OCI-LY7 (cell line): ENCODE measurements at regions of chr4 and their contacts with region 1.

Region 1: GRCh38 chr4:139266583-139267257 is 13.3 kb downstream of the MGARP start:
- DNase-seq: peak; percentile 86
- H3K4me3 ChIP-seq: peak overlapping the region; percentile 68
- H3K27ac ChIP-seq: peak overlapping the region; percentile 78
- H3K4me1 ChIP-seq: peaks cover 39% of the 10 kb centered on the region
- CTCF ChIP-seq: no peak

Region 2: GRCh38 chr4:138555584-138555983 is 711.1 kb before region 1 on chr4:
- CTCF ChIA-PET with region 1: no interaction called
- POLR2A ChIA-PET with region 1: no interaction called
- intact Hi-C with region 1: no loop called
- DNase-seq: peak; percentile 11
- H3K4me3 ChIP-seq: no peak overlapping the region
- H3K27ac ChIP-seq: no peak overlapping the region
- H3K4me1 ChIP-seq: no peaks in the 10 kb centered on the region
- CTCF ChIP-seq: peak; percentile 66

Region 3: DNA sequence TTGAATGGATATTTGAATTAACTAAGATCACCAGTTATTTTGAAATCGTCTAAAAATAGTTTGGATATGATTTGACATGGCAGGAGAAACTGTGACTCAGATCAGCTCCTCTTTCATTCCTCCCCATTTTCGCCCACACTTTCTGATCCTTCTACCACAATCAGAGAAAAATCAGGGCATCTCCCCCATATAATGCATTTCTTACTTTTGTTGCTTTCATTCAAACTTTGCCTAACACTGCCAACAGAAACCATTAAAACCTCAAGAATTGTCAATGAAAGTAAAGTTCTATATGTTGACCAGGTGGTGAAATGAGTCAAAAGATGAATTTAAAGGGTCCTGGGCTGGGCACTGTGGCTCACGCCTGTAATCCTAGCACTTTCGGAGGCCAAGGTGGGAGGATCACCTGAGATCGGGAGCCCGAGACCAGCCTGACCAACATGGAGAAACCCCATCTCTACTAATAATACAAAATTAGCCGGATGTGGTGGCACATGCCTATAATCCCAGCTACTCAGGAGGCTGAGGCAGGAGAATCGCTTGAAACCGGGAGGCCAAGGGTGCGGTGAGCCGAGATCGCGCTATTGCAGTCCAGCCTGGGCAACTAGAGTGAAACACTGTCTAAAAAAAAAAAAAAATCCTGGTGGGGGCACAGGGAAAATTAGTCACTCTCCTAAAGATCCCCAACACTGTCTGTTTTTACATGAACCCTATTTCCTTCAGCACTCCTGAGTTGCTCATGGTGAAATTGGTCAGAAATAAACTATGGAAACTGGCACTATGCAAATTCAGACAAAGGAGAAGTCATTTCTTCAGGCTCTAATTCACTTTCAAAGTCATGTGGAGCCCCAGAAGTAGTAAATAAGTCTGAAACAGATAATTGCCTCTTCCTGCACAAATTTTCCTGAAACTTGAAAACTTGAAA is 374.0 kb before region 1 on chr4:
- CTCF ChIA-PET with region 1: no interaction called
- POLR2A ChIA-PET with region 1: no interaction called
- intact Hi-C with region 1: no loop called
- DNase-seq: no peak
- H3K4me3 ChIP-seq: no peak overlapping the region
- H3K27ac ChIP-seq: no peak overlapping the region
- H3K4me1 ChIP-seq: no peaks in the 10 kb centered on the region
- CTCF ChIP-seq: no peak

Region 4: DNA sequence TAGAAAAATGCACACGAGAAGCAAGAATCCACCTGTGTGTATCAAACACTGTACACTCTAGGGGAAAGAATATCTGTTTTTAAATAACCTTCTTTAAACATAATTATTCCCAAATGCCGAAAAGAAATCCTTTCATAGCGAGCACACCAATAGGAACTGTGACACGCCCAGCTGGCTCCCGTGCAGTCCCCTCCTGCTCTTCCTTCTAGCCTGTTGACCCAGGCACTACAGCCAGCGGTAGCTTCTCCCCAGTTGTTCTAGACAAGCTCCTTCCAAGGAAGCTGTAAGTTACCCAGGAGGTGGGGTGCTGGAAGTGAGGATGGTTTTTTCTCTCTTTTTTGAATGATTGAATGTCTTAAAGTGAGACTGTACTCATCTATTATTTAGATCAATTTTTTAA is 270.6 kb before region 1 on chr4:
- CTCF ChIA-PET with region 1: no interaction called
- POLR2A ChIA-PET with region 1: no interaction called
- intact Hi-C with region 1: no loop called
- DNase-seq: no peak
- H3K4me3 ChIP-seq: no peak overlapping the region
- H3K27ac ChIP-seq: no peak overlapping the region
- H3K4me1 ChIP-seq: no peaks in the 10 kb centered on the region
- CTCF ChIP-seq: no peak

Region 5: GRCh38 chr4:139253713-139254112 is 13.0 kb before region 1 on chr4:
- CTCF ChIA-PET with region 1: interaction called, 3 read pairs
- POLR2A ChIA-PET with region 1: interaction called, 24 read pairs
- intact Hi-C with region 1: no loop called
- DNase-seq: no peak
- H3K4me3 ChIP-seq: no peak overlapping the region
- H3K27ac ChIP-seq: peak overlapping the region; percentile 45
- H3K4me1 ChIP-seq: peaks cover 42% of the 10 kb centered on the region
- CTCF ChIP-seq: no peak

Region 6: DNA sequence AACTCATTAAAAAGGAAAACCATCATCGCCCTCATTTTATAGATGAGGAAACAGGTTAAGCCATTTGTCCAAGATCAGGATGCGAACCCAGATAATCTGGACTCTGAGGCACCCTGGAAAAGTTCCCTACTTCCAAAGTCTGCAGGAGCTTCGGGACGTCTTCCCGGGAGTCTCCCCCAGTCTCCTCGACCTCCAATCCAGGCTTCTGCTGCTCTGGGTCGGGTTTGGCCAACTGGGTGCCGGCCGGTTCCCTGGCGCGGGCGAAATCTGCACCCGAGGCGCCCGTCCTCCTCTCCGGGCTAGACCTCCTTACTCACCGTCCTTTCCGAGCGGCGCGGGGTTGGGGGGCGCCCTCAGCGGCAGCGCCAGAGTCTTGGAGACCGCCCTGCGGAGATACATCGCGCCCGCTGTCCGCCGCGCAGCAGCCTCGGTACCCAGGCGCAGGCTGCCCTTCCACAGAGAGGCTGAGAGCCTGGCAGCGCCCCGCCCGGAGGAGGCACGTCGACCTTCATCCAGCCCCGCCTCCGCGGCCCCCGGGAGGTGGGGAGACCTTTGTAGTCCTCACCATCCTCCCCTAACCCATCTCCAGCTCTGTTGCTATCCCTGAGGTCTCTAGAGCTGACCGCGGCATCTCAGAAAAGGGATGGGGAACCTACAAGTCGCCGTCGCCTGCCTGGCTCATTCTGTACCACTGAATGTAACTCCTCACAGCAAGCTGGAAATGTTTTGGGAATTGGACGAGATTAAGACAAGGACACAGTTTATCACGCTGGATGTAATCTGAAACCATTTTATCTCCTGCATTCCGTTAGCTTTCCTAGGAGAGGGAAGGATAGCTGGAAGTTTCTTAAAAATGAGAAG is 13.3 kb after region 1 on chr4 and contains the start of gene MGARP:
- CTCF ChIA-PET with region 1: no interaction called
- POLR2A ChIA-PET with region 1: interaction called, 24 read pairs
- intact Hi-C with region 1: no loop called
- DNase-seq: no peak
- H3K4me3 ChIP-seq: peak within 1 kb of the TSS; percentile 29
- H3K27ac ChIP-seq: no peak within 1 kb of the TSS
- H3K4me1 ChIP-seq: peaks cover 19% of the 10 kb centered on the region
- CTCF ChIP-seq: no peak
- total RNA-seq, gene MGARP: 0.88 and 2.6 TPM in 2 replicates

Region 7: DNA sequence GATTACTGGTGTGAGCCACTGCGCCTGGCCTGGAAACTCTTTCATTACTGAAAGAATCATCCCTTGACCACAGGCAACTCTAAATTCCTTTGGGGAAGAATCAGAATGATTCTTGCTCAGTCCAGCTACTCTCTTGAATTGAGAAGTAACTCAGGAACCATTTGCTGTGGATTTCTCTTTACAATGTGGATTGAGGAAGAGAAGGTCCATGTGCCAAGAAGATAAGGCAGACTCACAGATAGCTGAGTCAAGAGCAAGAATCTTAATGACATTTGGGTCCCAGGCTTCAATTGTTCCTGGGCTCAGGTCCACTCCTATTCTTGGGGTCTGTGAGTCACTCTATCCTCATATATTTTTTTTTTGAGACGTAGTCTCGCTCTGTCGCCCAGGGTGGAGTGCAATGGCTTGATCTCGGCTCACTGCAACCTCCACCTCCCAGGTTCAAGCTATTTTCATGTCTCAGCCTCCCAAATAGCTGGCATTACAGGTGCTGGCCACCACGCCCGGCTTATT is 19.5 kb after region 1 on chr4:
- CTCF ChIA-PET with region 1: no interaction called
- POLR2A ChIA-PET with region 1: interaction called, 24 read pairs
- intact Hi-C with region 1: no loop called
- DNase-seq: no peak
- H3K4me3 ChIP-seq: no peak overlapping the region
- H3K27ac ChIP-seq: no peak overlapping the region
- H3K4me1 ChIP-seq: peaks cover 8% of the 10 kb centered on the region
- CTCF ChIP-seq: no peak

Region 8: GRCh38 chr4:139295206-139295941 is 28.7 kb after region 1 on chr4:
- CTCF ChIA-PET with region 1: interaction called, 3 read pairs
- POLR2A ChIA-PET with region 1: interaction called, 15 read pairs
- intact Hi-C with region 1: no loop called
- DNase-seq: peak; percentile 97
- H3K4me3 ChIP-seq: peak overlapping the region; percentile 86
- H3K27ac ChIP-seq: peak overlapping the region; percentile 65
- H3K4me1 ChIP-seq: peaks cover 32% of the 10 kb centered on the region
- CTCF ChIP-seq: peak; percentile 95